Dendritic cell treated with granulocyte-macrophage colony-stimulating factor and Interleukin-4, amounts not matched to agents 40 ng/mL and 50 ng/mL, for 4 days (primary cell): ENCODE measurements at regions of chr19 and their contacts with region 1.

Region 1: DNA sequence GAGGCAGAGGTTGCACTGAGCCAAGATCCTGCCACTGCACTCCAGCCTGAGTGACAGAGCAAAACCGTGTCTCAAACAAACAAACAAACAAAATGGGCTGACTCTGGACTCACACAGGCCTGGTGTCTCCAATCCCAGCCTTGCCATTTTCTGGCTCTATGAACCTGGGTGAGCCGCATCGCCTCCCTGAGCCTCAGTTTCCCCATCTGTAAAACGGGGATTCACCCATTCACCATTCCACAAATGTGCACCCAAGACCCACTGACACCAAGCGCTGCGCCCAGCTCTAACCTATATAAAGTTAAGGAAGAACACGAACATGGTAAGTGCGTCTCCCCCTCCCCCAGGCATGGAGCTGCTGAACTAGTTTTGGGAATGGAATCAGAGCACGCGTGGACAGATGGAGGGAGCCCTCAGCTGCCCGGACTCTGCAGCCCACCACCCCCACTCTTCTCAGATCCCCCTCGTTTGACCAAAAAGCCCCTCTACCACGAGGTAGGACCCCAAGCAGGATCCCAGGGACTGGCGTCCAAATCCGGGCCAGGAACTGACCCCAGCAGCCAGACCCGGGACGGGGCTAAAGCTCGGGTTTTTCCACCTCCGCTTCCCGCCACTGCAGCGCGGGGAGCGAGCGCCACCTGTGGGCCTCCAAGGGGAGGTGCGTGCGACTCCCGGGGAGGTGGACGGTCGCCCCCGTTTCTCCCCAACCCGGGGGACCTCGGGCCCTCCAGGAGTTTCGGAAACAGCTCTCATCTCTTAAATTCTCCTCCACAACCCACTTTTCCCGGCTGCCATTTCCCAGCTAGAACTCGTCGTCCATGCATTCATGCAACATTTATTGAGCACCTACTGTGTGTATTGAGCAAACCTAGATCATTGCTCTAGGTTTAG is 33.0 kb upstream of the ADGRE5 start:
- H3K4me3 Mint-ChIP-seq: peak overlapping the region; percentile 58
- H3K27ac Mint-ChIP-seq: no peak overlapping the region
- H3K4me1 Mint-ChIP-seq: peaks cover 40% of the 10 kb centered on the region
- H3K27me3 Mint-ChIP-seq: peaks cover 24% of the 10 kb centered on the region

Region 2: DNA sequence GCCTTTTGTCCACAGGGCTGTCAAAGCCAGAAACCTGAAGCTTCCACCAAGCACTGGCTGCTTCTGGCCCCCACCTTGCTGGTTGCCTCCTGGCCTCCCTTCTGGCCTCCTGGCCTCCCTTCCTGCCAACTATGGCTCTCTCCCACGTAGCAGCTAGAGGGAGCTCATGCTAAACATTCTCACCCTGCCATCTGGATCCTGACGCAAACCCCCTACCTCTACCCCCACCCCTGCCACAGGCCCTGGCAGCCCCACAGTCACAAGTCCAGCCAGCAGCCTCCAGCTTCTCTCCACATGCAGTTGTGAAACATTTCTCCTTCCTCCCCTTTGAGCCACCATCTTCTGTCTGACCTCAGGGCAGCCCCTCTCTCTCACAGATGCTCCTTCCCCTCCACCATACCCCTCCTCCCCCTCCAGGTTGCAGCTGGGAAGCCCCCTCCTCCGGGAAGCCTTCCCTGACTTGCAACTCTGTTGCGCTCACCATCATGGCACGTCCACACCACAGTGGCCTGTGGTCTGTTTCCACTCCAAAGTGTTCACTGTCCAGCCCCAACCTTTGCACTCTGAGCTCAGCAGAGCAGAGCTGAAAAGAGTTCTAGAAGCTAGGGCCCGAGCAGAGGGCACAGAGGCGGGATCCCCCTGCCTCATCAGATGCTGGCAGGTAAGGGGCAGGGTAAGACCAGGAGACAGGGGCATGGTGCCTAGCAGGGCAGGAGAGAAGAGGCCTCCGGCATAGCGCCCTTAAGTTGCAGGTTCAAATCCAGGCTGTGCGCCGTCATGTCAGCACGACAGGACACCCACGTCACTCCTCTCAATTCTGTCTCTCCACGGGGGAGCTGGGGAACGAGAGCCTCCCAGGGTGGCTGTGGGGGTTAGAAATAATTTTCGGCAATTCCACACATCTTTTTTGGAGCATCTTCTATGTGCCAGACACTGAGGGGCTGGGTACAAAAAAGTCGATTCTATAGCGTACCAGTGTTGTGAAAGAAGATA is 149.6 kb before region 1 on chr19:
- intact Hi-C with region 1: loop called (anchors 5 kb)
- H3K4me3 Mint-ChIP-seq: no peak overlapping the region
- H3K27ac Mint-ChIP-seq: no peak overlapping the region
- H3K4me1 Mint-ChIP-seq: peaks cover 18% of the 10 kb centered on the region
- H3K27me3 Mint-ChIP-seq: peaks cover 47% of the 10 kb centered on the region

Region 3: GRCh38 chr19:14325863-14326262 is 22.4 kb before region 1 on chr19:
- intact Hi-C with region 1: no loop called
- H3K4me3 Mint-ChIP-seq: no peak overlapping the region
- H3K27ac Mint-ChIP-seq: no peak overlapping the region
- H3K4me1 Mint-ChIP-seq: no peaks in the 10 kb centered on the region
- H3K27me3 Mint-ChIP-seq: peaks cover 40% of the 10 kb centered on the region

Region 4: GRCh38 chr19:14395710-14396336 is 47.6 kb after region 1 on chr19:
- intact Hi-C with region 1: no loop called
- H3K4me3 Mint-ChIP-seq: no peak overlapping the region
- H3K27ac Mint-ChIP-seq: no peak overlapping the region
- H3K4me1 Mint-ChIP-seq: peaks cover 29% of the 10 kb centered on the region
- H3K27me3 Mint-ChIP-seq: no peaks in the 10 kb centered on the region